ENCODE measurements at regions of chr3 and their contacts with region 1.

Region 1: GRCh38 chr3:189355481-189356201 is 183.9 kb downstream of the TPRG1 start:
- DNase-seq: peak in 8 of 9 experiments; percentile 23 to 80 (median 52)
- ATAC-seq: peak; percentile 91
- H3K4me3 ChIP-seq: no peak overlapping the region
- H3K4me3 Mint-ChIP-seq: peak overlapping the region; percentile 60
- H3K27ac ChIP-seq: peak overlapping the region in 1 of 2 experiments; percentile 47
- H3K27ac Mint-ChIP-seq: peak overlapping the region; percentile 88
- H3K4me1 ChIP-seq: peaks cover 15% of the 10 kb centered on the region
- H3K4me1 Mint-ChIP-seq: peaks cover 26% of the 10 kb centered on the region
- H3K27me3 ChIP-seq: no peaks in the 10 kb centered on the region
- H3K27me3 Mint-ChIP-seq: no peaks in the 10 kb centered on the region
- CTCF ChIP-seq: no peak

Region 2: GRCh38 chr3:189340672-189341460 is 14.8 kb before region 1 on chr3:
- CTCF ChIA-PET with region 1: interaction called, 3 read pairs
- POLR2A ChIA-PET with region 1: interaction called, 6 read pairs
- intact Hi-C with region 1: loop called in 1 of 2 experiments (anchors 2 kb)
- DNase-seq: peak in 2 of 9 experiments; percentile 17 to 34
- ATAC-seq: no peak
- H3K4me3 ChIP-seq: no peak overlapping the region
- H3K4me3 Mint-ChIP-seq: no peak overlapping the region
- H3K27ac ChIP-seq: no peak overlapping the region
- H3K27ac Mint-ChIP-seq: no peak overlapping the region
- H3K4me1 ChIP-seq: no peaks in the 10 kb centered on the region
- H3K4me1 Mint-ChIP-seq: peaks cover 4% of the 10 kb centered on the region
- H3K27me3 ChIP-seq: no peaks in the 10 kb centered on the region
- H3K27me3 Mint-ChIP-seq: no peaks in the 10 kb centered on the region
- CTCF ChIP-seq: no peak

Region 3: GRCh38 chr3:189365609-189366564 is 10.2 kb after region 1 on chr3:
- CTCF ChIA-PET with region 1: interaction called, 3 read pairs
- POLR2A ChIA-PET with region 1: interaction called, 10 read pairs
- intact Hi-C with region 1: loop called in 1 of 2 experiments (anchors 1 kb)
- DNase-seq: no peak
- ATAC-seq: no peak
- H3K4me3 ChIP-seq: no peak overlapping the region
- H3K4me3 Mint-ChIP-seq: no peak overlapping the region
- H3K27ac ChIP-seq: no peak overlapping the region
- H3K27ac Mint-ChIP-seq: no peak overlapping the region
- H3K4me1 ChIP-seq: no peaks in the 10 kb centered on the region
- H3K4me1 Mint-ChIP-seq: peaks cover 7% of the 10 kb centered on the region
- H3K27me3 ChIP-seq: no peaks in the 10 kb centered on the region
- H3K27me3 Mint-ChIP-seq: no peaks in the 10 kb centered on the region
- CTCF ChIP-seq: no peak

Region 4: GRCh38 chr3:189375532-189375931 is 19.9 kb after region 1 on chr3:
- CTCF ChIA-PET with region 1: no interaction called
- POLR2A ChIA-PET with region 1: interaction called, 10 read pairs
- intact Hi-C with region 1: loop called in 1 of 2 experiments (anchors 2 kb)
- DNase-seq: no peak
- ATAC-seq: no peak
- H3K4me3 ChIP-seq: no peak overlapping the region
- H3K4me3 Mint-ChIP-seq: no peak overlapping the region
- H3K27ac ChIP-seq: no peak overlapping the region
- H3K27ac Mint-ChIP-seq: no peak overlapping the region
- H3K4me1 ChIP-seq: no peaks in the 10 kb centered on the region
- H3K4me1 Mint-ChIP-seq: peaks cover 2% of the 10 kb centered on the region
- H3K27me3 ChIP-seq: no peaks in the 10 kb centered on the region
- H3K27me3 Mint-ChIP-seq: no peaks in the 10 kb centered on the region
- CTCF ChIP-seq: no peak

Measured in CD8-positive, alpha-beta T cell (primary cell).